ENCODE measurements at regions of chr9 and their contacts with region 1.

Region 1: GRCh38 chr9:21294904-21295538 is 10.1 kb downstream of the IFNA5 start:
- DNase-seq: no peak
- ATAC-seq: peak; percentile 37
- H3K4me3 Mint-ChIP-seq: no peak overlapping the region
- H3K27ac Mint-ChIP-seq: no peak overlapping the region
- H3K4me1 Mint-ChIP-seq: peaks cover 14% of the 10 kb centered on the region
- H3K27me3 Mint-ChIP-seq: peaks cover 4% of the 10 kb centered on the region
- CTCF ChIP-seq: no peak

Region 2: GRCh38 chr9:21267485-21268346 is 27.3 kb before region 1 on chr9:
- CTCF ChIA-PET with region 1: no interaction called
- POLR2A ChIA-PET with region 1: no interaction called
- intact Hi-C with region 1: loop called (anchors 5 kb)
- DNase-seq: no peak
- ATAC-seq: peak; percentile 58
- H3K4me3 Mint-ChIP-seq: peak overlapping the region; percentile 33
- H3K27ac Mint-ChIP-seq: no peak overlapping the region
- H3K4me1 Mint-ChIP-seq: peaks cover 29% of the 10 kb centered on the region
- H3K27me3 Mint-ChIP-seq: peaks cover 13% of the 10 kb centered on the region
- CTCF ChIP-seq: no peak